Left cardiac atrium (tissue), 4 donors: ENCODE measurements at regions of chr11 and their contacts with region 1.

Region 1: DNA sequence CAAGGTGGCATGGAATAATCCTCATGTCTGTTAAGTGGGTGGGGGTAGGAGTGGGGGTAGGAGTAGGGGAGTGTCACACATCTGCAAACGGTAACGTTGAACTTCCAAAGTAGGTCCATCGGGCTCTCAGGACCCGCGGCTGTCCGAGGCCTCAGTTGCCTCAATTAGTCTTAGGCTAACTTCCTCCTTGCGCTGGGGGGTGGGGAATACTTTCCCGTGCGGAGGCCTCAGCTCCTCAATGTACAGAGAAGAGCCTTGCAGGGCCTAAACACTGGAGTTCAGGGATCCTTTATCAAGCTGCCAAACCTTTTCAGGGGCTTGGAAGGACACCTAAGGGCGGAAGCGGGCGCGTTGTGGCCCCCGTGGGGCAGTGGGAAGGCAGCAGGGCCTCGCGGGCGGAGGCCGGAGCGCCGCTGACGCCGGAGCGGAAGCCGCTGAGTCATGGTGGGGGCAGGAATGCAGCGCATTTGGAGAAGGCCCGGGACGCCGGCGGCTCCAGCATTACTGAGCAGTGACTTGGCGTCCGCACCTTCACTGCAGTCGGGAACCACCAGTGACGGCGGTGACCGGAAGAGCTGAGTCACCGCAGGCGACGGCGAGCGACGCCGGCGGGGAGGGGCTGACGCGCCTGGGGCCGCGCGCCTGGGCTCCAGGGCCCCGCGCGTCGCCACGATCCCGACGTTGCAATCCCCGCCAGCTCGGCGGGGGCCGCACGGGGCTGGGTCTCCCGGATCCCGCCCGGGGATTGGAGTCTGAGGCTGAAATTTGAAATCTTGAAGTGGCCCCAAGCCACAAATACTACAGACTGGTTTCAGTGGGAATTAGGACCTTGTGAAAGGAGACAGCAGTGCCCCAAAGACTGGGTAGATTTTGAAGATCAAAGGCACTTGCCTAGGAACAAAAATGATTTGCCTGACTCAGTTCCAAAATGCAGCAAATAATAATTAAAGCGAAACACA is 20.2 kb upstream of the IPO7 start:
- DNase-seq: peak; percentile 97
- ATAC-seq: peak; percentile 98 to 99

Region 2: DNA sequence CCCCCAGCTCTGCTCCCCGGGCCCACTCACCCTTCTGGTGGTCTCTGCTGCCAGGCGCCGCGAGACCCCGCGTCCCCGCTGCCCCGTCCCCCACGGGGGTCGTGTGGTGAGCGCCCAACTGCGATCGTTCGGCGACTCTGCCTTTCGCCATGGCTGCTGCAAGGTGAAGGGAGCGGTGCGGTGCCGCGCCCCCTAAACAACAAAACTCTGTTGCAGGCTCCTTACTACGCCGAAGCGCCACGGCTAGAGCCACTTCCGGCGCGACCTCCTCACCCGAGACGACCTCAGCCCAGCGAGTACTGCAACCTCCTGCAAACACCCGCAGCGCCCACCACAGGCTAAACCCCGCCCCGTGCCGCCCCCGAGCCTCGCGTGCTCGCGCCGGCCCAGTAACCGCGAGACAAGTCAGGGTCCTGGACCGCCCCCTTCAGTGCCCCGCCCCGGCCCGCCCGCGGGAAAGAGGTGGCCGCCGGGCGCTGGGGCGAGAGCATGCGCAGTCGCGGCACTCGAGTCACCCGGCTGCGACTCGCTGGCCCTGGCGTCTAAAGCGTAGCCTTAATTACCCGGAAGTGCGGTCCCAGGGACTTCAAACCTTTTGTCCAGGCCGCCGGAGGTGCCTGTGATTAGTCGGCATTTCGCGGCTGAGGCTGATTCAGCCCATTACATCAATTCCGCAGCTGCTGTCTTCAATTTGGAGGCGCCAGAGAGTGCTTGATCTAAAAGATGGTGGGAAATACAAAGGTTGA is 49.8 kb before region 1 on chr11 and contains the start of gene TMEM41B:
- intact Hi-C with region 1: loop called in 1 of 2 experiments (anchors 5 kb)
- DNase-seq: peak; percentile 99
- ATAC-seq: peak; percentile 99
- total RNA-seq, gene TMEM41B: 18.3 to 20.7 TPM

Region 3: GRCh38 chr11:9489080-9489765 is 125.0 kb after region 1 on chr11:
- intact Hi-C with region 1: no loop called
- DNase-seq: no peak
- ATAC-seq: no peak

Region 4: DNA sequence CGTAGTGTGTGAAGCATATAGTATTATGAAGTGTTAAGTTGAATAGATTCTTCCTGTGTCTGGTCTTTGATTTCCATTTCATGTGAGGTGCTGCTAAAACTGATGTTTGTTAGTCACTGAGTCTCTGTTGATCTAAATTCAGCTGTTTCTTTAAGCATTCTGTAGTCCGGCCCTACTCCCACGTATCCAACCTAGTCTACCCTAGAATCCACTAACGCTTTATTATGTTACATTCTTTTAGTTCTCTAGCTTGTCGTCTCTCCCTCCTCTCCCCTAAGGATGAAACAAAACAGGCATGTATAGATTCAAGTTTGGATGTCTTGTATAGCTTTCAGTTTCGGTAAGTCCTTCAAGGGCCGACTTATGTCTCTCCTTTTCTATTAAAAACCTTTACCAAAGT is 213.3 kb after region 1 on chr11:
- intact Hi-C with region 1: no loop called
- DNase-seq: no peak
- ATAC-seq: no peak